ENCODE measurements at regions of chr1 and their contacts with region 1.

Region 1: DNA sequence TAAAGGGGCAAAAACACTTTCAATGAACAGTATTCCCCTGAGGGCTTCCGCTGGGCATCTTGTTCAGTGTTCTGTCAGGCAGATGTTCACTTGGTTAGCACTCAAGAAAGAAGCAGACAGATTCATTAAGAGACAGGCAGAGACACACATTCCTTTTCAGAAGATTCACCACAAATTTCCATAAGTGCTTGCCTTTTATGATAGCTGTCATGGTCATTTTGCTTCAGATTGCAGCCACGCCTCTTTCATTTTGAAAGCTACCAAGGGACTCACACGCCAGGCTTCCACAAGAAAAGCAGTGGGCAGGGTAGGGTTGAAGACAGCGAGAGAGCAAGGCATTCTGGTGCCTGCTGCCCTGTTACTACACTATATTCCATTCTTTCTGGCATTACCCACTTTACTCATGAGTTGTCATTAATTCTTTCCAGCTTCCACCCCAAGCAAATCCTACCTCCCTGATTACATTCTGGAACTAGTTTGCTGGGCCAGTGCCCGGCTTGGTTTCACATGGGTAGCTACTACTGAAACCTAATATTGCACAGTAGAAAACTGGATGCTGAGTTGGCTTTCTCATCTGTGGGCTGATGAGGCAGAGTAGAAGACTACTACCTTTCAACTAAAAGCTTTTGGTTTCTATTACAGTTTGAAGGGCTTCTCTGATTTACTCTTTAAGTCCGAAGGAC is 91.2 kb upstream of the COL24A1 start:
- DNase-seq: no peak
- H3K4me3 Mint-ChIP-seq: no peak overlapping the region
- H3K27ac Mint-ChIP-seq: no peak overlapping the region
- H3K4me1 Mint-ChIP-seq: no peaks in the 10 kb centered on the region
- H3K27me3 Mint-ChIP-seq: no peaks in the 10 kb centered on the region

Region 2: GRCh38 chr1:86335916-86336315 is 88.2 kb after region 1 on chr1:
- intact Hi-C with region 1: loop called (anchors 2 kb)
- DNase-seq: no peak
- H3K4me3 Mint-ChIP-seq: no peak overlapping the region
- H3K27ac Mint-ChIP-seq: no peak overlapping the region
- H3K4me1 Mint-ChIP-seq: no peaks in the 10 kb centered on the region
- H3K27me3 Mint-ChIP-seq: no peaks in the 10 kb centered on the region

Measured in activated T-helper 2 cell treated with anti-CD3 and anti-CD28 coated beads, Interferon-gamma antibody, Interleukin-2, Interleukin-4, amounts not matched to agents 10 μg/mL and 5 μg/mL and 100 μg/mL, durations not matched to agents 14 hours and 24 hours and 36 hours (primary cell).